Lower leg skin (tissue), 4 donors: ENCODE measurements at regions of chr3 and their contacts with region 1.

Region 1: DNA sequence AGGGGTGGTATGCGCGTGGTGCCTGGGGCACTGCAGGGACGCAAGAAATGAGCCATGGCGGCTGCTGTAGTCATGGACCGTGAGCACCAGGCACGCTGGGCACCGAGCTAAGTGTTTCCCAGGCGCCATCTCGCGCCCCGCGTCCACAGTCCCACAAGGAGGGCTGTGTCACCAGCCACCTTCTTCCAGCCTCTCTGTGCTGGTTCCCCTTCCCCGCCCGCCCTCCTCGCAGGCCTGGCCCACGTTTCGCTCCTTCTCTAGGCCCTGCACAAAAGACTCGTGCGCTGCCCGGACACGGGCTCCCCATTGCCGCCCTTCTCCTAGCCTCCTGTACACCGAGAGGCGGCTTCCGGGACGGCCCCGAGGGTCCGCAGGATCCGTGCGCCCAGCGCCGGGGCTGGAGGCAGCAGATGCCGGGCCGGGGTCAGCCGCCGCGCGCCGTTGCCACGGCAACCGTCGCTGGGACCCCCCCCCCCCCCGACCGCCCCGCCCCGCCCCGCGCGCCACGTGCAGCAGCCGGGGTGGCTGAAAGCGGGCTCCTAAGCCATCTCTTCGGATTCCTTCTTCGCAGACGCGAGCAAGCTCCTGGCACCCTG is 113.4 kb downstream of the SRGAP3 start:
- DNase-seq: no peak
- H3K4me3 ChIP-seq: no peak overlapping the region
- CTCF ChIP-seq: no peak
- POLR2A ChIP-seq: no peak

Region 2: DNA sequence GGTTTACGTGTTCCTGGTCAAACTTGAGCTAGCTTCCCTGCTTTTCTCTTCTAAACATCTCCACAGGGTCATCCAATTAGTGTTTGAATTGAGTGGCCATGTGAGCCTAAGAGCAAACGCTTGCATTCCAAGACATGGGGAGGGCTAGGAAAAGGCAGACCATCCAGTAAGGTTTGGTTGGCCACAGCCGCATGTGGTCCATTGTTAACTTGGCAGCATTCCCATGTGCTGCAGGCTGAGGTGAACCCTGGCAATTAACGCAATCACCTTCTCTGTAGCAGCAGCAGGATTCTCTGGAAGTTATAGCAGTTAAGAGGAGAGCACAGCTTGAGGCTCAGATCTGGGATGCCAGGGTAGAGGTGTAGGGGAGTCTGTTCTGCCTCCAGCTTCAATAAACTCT is 1136.6 kb before region 1 on chr3:
- intact Hi-C with region 1: loop called (anchors 10 kb)
- DNase-seq: no peak
- H3K4me3 ChIP-seq: no peak overlapping the region
- CTCF ChIP-seq: no peak
- POLR2A ChIP-seq: no peak

Region 3: DNA sequence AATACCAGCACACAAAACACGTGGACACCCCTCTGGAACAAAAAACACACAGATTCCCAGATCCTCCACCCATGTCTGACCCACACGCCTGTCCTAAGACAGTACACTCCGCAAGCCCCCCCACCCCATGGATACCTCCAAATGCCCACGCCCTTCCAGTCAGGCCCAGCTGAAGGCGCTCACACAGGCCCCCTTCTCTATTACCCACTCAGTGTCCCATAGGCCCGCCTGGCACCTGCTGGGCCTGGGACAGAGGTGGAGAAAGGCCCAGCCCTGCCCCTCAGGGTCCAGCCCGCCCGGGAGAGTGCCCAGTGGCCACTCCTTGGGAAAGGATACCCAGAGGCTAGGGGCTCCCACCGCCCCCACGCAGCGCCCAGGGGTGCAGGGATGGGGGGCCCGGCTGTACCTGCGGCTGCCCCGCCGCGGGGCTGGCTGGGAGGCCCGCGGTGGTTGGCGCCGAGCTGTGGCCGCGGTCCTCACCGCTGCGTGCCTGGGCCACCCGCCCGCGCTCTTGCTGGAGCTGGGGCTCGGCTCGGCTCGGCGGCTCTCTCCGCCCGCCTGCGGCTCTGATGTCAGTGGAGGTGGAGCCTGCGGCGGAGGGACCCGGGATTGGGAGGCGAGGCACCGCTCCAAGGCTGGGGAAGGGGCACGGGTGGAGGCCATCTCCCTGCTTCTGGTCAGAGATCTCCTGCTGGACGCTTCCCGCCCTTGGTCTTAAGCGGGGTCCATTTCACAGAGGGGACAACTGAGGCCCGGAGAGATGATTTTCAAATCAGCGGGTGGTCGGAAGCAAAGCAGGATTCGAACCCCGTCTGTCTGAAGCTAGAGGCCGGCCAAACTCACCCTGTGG is 633.6 kb after region 1 on chr3 and contains the start of gene CAMK1:
- intact Hi-C with region 1: no loop called
- DNase-seq: peak; percentile 52 to 95
- H3K4me3 ChIP-seq: peak within 1 kb of the TSS; percentile 53
- CTCF ChIP-seq: no peak
- POLR2A ChIP-seq: no peak
- total RNA-seq, gene CAMK1: 3.1 to 10.1 (median 9.4) TPM

Region 4: GRCh38 chr3:9927917-9928557 is 792.0 kb after region 1 on chr3:
- intact Hi-C with region 1: no loop called
- DNase-seq: no peak
- H3K4me3 ChIP-seq: no peak overlapping the region
- CTCF ChIP-seq: no peak
- POLR2A ChIP-seq: no peak